Ovary (tissue), 10 donors: ENCODE measurements at regions of chr19 and their contacts with region 1.

Region 1: DNA sequence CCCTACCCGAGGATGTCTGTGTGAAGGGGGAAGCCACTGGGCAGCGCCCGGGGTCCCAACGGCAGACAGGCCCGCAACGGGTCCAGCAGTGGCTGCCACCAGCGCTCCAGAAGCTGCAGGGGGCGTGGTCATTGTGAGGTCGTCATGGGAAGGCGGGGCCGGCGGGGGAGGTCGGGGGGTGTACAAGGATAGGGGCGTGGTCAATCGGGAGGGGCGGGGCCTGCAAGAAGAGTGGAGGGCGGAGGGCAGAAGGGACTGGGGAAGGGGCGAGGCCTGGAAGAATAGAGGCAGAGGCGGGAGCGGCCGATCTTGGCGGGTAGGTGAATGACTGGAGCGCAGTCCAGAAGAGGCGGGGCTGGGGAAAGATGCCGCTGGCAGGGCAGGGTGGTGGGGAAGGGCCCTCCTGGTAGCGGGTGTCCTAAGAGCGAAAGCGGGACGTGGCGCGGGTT is 4.4 kb downstream of the FUZ start:
- DNase-seq: peak; percentile 95 to 98 (median 97)
- H3K4me3 ChIP-seq: peak overlapping the region; percentile 81
- H3K27ac ChIP-seq: peak overlapping the region; percentile 72 to 86
- H3K4me1 ChIP-seq: peaks cover 4% of the 10 kb centered on the region
- H3K27me3 ChIP-seq: no peaks in the 10 kb centered on the region
- CTCF ChIP-seq: no peak
- EP300 ChIP-seq: no peak
- POLR2A ChIP-seq: peak; percentile 74

Region 2: DNA sequence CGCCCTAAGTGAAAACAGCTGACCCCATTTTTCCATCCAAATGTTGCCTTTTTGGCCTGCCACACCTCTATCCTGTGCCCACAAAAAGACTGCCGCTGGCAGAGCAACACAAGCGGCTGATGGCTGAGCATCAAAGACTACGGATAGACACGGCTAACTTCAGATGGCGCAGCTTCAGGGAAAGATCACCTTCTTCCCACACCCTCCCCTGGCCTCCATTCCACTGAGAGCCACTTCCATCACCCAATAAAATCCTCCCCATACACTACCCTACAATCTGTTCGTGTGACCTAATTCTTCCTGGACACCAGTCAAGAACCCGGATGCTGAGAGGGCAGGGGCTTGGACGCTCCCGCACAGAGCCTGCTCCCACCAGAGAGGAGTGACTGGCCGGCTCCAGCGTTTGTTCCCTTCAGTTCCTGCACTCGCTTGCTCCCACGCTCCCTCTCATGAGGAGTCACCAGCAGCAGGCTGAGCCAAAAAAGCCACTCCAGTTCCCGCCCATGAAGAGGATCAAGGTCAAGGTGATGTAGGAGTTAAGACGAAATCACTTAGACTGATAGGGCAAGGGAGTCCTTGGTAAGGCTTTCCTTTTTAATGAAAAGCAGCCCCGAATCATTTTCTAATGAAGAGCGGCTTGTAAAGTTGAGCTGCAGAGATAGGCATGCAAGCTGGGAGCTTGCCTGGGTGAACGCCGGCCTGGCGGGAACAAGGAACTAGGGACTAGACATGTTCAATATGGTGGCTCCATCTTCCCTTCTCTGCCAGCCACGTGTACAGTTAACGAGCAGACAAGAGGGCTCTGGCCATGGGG is 81.3 kb before region 1 on chr19:
- intact Hi-C with region 1: loop called in 2 of 4 experiments (anchors 5 to 10 kb)
- DNase-seq: peak; percentile 85 to 92 (median 90)
- H3K4me3 ChIP-seq: no peak overlapping the region
- H3K27ac ChIP-seq: peak overlapping the region; percentile 26 to 76
- H3K4me1 ChIP-seq: peaks cover 8% of the 10 kb centered on the region
- H3K27me3 ChIP-seq: no peaks in the 10 kb centered on the region
- CTCF ChIP-seq: peak in 1 of 3 donors; percentile 12
- EP300 ChIP-seq: no peak
- POLR2A ChIP-seq: no peak

Region 3: GRCh38 chr19:49766007-49766937 is 42.5 kb before region 1 on chr19:
- intact Hi-C with region 1: loop called in 2 of 4 experiments (anchors 5 kb)
- DNase-seq: peak; percentile 100
- H3K4me3 ChIP-seq: peak overlapping the region; percentile 97
- H3K27ac ChIP-seq: peak overlapping the region; percentile 63 to 92
- H3K4me1 ChIP-seq: peaks cover 13% of the 10 kb centered on the region
- H3K27me3 ChIP-seq: no peaks in the 10 kb centered on the region
- CTCF ChIP-seq: peak in 2 of 3 donors; percentile 30 to 31
- EP300 ChIP-seq: no peak
- POLR2A ChIP-seq: peak; percentile 86

Region 4: GRCh38 chr19:49862376-49863253 is 53.9 kb after region 1 on chr19:
- intact Hi-C with region 1: loop called in 1 of 4 experiments (anchors 5 kb)
- DNase-seq: peak; percentile 54 to 89 (median 56)
- H3K4me3 ChIP-seq: no peak overlapping the region
- H3K27ac ChIP-seq: peak overlapping the region; percentile 65 to 68
- H3K4me1 ChIP-seq: peaks cover 17% of the 10 kb centered on the region
- H3K27me3 ChIP-seq: no peaks in the 10 kb centered on the region
- CTCF ChIP-seq: peak in 1 of 3 donors; percentile 10
- EP300 ChIP-seq: no peak
- POLR2A ChIP-seq: no peak